H1 (cell line): ENCODE measurements at regions of chr4 and their contacts with region 1.

Region 1: DNA sequence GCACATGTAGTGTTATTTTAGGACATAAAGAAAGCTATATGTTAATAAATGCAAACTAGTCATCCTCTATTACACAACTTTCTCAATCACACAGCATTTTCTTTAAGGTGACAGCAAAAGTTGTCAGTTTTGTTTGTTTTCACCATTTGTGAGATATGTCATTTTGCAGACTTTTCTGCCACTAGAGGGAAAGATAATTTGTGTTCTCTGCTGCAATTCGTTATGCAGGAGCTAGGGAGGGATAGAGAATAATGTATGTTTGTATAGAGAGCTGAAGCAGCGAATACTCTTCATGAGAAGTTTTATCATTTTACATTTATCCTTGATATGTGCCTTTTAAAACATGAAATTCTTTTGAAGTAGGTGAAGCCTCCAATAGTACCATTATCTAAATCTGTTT is 670.6 kb upstream of the ATOH1 start:
- DNase-seq: no peak
- H3K4me3 ChIP-seq: no peak overlapping the region
- H3K27ac ChIP-seq: no peak overlapping the region
- H3K4me1 ChIP-seq: peaks cover 0 to 4% (median 3%) of the 10 kb centered on the region in 4 experiments; a peak in 3 of 7 replicates
- H3K27me3 ChIP-seq: no peaks in the 10 kb centered on the region
- CTCF ChIP-seq: peak in 2 of 3 experiments; percentile 58 to 69; a peak in 2 of 4 replicates
- EP300 ChIP-seq: no peak
- POLR2A ChIP-seq: no peak
- RAD21 ChIP-seq: peak; percentile 28 to 32

Region 2: GRCh38 chr4:93147524-93148212 is 10.3 kb before region 1 on chr4:
- CTCF ChIA-PET with region 1: interaction called, 10 read pairs
- POLR2A ChIA-PET with region 1: no interaction called
- DNase-seq: peak in 1 of 2 experiments; percentile 56
- H3K4me3 ChIP-seq: peak overlapping the region in 1 of 4 experiments; percentile 38; a peak in 1 of 8 replicates
- H3K27ac ChIP-seq: no peak overlapping the region
- H3K4me1 ChIP-seq: peaks cover 0 to 17% (median 11%) of the 10 kb centered on the region in 4 experiments; a peak in 5 of 7 replicates
- H3K27me3 ChIP-seq: no peaks in the 10 kb centered on the region
- CTCF ChIP-seq: no peak
- EP300 ChIP-seq: no peak
- POLR2A ChIP-seq: no peak
- RAD21 ChIP-seq: no peak

Region 3: GRCh38 chr4:93178290-93178689 is 20.3 kb after region 1 on chr4:
- CTCF ChIA-PET with region 1: interaction called, 10 read pairs
- POLR2A ChIA-PET with region 1: no interaction called
- DNase-seq: no peak
- H3K4me3 ChIP-seq: no peak overlapping the region
- H3K27ac ChIP-seq: no peak overlapping the region
- H3K4me1 ChIP-seq: no peaks in the 10 kb centered on the region
- H3K27me3 ChIP-seq: no peaks in the 10 kb centered on the region
- CTCF ChIP-seq: no peak
- EP300 ChIP-seq: no peak
- POLR2A ChIP-seq: no peak
- RAD21 ChIP-seq: no peak

Region 4: GRCh38 chr4:93199492-93199891 is 41.5 kb after region 1 on chr4:
- CTCF ChIA-PET with region 1: interaction called, 14 read pairs
- POLR2A ChIA-PET with region 1: no interaction called
- DNase-seq: peak in 1 of 2 experiments; percentile 25
- H3K4me3 ChIP-seq: no peak overlapping the region; a peak in 1 of 8 replicates
- H3K27ac ChIP-seq: no peak overlapping the region
- H3K4me1 ChIP-seq: peaks cover 0 to 6% (median 4%) of the 10 kb centered on the region in 4 experiments; a peak in 4 of 7 replicates
- H3K27me3 ChIP-seq: no peaks in the 10 kb centered on the region
- CTCF ChIP-seq: peak in 2 of 3 experiments; percentile 58 to 67; a peak in 3 of 4 replicates
- EP300 ChIP-seq: peak in 1 of 2 experiments; percentile 36; a peak in 1 of 3 replicates
- POLR2A ChIP-seq: no peak
- RAD21 ChIP-seq: peak; percentile 78 to 83